Sciatic nerve (tissue), 2 donors: ENCODE measurements at regions of chr12 and their contacts with region 1.

Region 1: GRCh38 chr12:67649570-67650387 is 1.2 kb downstream of the DYRK2 start:
- DNase-seq: peak; percentile 71
- ATAC-seq: peak; percentile 4

Region 2: GRCh38 chr12:67433385-67434175 is 216.2 kb before region 1 on chr12:
- intact Hi-C with region 1: loop called (anchors 10 kb)
- DNase-seq: no peak
- ATAC-seq: no peak